ENCODE measurements at regions of chr4 and their contacts with region 1.

Region 1: DNA sequence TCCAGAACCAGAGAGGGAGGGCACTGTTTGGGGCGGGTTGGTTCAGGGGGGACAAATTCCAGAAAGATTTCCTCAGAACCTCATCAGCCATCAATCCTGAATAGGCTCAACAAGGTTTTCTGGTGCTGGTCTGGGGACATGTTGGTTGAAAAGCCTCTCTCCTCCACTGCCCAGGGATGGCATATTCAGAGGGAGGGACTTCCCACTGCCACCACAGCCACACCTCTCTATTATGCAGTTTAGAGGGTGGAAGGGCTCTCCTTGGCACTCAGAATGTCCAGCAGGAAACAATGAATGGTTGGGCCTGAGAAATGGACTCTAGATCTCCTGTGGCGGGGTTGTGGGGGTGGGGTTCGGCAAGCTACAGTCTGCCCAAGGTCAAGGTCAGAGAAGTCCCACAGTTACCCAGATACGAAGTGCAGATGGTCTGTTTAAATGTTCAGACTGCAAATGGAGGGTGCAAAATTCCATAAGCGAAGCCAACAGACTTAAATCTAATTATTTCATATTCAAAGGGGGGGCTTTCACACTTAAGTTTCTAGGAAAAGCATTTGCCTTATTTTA is 70.7 kb downstream of the LEF1 start:
- DNase-seq: no peak
- ATAC-seq: peak; percentile 39 to 65
- H3K4me3 Mint-ChIP-seq: peak overlapping the region; percentile 36 to 83 (median 69)
- H3K27ac Mint-ChIP-seq: peak overlapping the region; percentile 79 to 96 (median 89)
- H3K4me1 Mint-ChIP-seq: peaks cover 63 to 100% (median 93%) of the 10 kb centered on the region in 4 donors
- H3K27me3 Mint-ChIP-seq: no peaks in the 10 kb centered on the region

Region 2: DNA sequence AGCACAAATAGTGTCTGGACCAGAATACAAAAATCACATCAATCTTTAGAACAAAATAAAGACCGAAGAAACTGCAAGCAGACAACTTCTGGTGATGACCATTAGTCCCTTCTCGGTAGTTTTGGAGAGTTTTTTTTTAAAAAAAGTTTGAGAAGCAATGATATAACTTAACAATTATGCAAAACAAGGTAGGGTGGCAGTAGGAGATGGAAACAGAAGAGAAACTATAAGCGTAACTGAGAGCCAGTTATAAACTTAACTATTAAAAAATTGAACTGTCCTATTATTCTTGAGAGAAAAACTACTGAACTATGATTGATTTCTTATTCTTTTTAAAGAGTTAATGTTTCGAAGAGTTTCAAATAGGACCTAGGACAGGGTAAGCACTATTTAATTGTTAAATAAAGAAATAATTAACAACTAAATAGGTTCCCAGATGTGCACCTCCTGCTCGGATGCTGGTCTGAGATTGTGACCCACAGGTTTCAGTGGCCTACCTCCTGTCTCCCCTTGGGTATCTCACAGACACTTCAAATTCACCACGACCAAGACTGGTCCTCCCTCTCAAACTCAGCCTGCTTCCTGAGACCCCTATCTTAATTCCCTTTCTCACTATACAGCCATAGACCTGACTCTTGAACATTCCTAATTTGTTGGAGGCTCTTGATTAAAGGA is 10.6 kb before region 1 on chr4:
- POLR2A ChIA-PET with region 1: interaction called, 10 read pairs
- DNase-seq: no peak
- ATAC-seq: no peak
- H3K4me3 Mint-ChIP-seq: peak overlapping the region in 8 of 10 donors; percentile 11 to 68 (median 42)
- H3K27ac Mint-ChIP-seq: peak overlapping the region; percentile 77 to 99 (median 89)
- H3K4me1 Mint-ChIP-seq: peaks cover 30 to 85% (median 80%) of the 10 kb centered on the region in 4 donors
- H3K27me3 Mint-ChIP-seq: no peaks in the 10 kb centered on the region

Region 3: DNA sequence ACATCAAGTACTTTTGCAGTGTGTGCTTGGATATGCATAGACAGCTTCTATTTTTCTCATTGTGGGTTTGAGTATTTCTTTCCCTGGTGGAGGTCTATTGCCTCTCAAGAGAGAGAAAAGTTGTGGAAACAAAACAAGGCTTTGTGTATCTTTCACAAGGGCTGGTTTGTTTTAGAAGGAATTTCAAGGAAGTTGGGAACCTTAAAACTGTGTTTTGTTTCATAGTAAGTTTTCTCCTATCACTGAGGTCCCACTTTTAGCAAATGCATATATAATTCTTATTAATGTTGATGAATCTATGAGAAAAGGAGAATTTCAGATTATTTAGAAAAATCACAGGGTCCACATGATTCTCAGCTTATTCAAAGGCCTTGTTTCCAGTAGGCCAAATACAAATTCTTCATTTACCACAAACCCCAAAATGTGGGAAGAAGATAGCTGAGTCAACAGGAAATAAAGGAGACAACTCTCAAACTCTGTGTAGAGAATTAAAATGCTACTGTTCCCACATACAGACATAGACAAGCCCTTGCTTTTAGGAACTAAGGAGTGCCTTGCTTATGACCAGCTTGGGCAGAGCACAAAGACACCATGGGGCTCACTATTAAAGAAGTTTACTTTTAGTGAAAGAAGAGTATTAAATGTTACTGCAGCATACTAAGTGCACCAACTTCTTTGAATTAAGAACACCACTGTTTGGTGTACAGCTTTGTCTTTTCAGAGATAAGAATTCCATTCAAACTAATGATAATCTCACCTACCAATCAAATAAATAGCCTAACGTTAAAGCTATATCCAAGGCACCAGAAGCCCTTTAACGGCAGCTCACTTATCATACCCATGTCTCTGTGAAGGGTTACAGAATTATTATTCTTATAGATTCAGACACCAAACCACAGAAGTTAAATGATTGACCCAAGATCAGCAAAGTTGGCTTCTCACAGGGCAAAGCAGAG is 248.1 kb after region 1 on chr4:
- POLR2A ChIA-PET with region 1: no interaction called
- DNase-seq: no peak
- ATAC-seq: no peak
- H3K4me3 Mint-ChIP-seq: peak overlapping the region in 2 of 10 donors; percentile 9 to 10
- H3K27ac Mint-ChIP-seq: peak overlapping the region in 5 of 10 donors; percentile 5 to 85 (median 46)
- H3K4me1 Mint-ChIP-seq: peaks cover 20 to 47% (median 37%) of the 10 kb centered on the region in 4 donors
- H3K27me3 Mint-ChIP-seq: no peaks in the 10 kb centered on the region

Measured in naive thymus-derived CD8-positive, alpha-beta T cell (primary cell).